ENCODE measurements at regions of chr12 and their contacts with region 1.

Region 1: DNA sequence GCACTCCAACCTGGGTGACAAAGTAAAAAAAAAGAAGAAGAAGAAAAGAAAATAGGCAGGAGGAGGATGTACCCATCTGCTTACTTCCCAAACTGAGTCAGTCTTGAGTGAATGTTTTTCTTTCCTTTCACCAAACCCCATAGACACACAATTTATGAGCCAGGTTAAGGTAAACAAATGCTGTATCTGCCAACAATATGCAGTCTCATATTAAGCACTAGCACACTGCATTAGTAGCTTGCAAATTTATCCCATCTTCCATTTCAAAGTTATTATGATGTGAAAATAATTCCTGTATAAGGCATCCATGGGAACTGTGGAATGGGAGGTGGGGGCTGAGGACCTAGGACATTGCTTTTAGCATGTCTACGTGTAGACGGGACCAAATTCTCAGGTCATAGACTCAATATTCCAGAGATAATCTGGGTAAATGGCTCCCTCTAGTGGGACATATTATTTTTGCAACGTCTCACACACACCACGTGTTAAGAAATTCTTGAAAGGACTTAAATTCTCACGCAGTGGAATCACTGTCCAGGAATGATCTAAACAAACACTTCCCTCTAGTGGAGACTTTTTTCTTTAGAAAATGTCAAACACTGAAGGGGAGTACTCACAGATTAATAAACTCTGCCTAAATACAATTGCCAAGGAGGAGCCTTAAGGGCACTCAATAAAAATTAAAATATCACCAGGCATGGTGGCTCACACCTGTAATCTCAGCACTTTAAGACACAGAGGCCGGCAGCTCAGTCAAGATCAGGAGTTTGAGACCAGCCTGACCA is 17.1 kb upstream of the OR10P1 start:
- DNase-seq: peak; percentile 43 to 54
- H3K4me3 ChIP-seq: no peak overlapping the region
- H3K27ac ChIP-seq: no peak overlapping the region
- H3K4me1 ChIP-seq: no peaks in the 10 kb centered on the region
- H3K27me3 ChIP-seq: no peaks in the 10 kb centered on the region
- CTCF ChIP-seq: peak in 2 of 3 experiments; percentile 75 to 80; a peak in 3 of 4 replicates
- EP300 ChIP-seq: no peak
- POLR2A ChIP-seq: no peak
- RAD21 ChIP-seq: peak; percentile 95 to 98

Region 2: DNA sequence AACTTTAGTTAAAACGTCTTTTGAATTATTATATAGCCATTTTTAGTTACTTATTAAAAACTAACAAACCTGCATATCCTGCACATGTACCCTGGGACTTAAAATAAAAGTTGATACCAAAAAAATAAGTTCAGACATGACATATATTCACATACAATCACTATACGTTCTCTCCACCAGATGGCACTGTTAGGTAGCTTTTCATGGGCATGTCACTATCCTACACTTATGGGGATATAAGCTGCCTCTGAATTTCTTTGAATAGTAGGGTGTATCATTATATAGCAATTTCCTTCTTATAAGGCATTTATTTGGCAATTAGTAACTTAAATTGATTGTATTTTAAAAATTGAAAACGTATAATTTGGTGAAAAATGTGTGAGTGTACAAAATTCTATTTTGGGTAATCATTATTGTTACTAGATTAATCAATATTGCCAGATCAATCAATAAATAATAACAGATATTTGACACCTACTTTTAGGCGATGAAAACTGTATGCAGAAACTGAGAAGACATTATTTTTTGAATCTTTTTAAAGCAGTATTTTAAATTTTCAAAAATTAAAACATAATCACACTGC is 430.5 kb before region 1 on chr12:
- CTCF ChIA-PET with region 1: interaction called, 54 read pairs
- POLR2A ChIA-PET with region 1: no interaction called
- DNase-seq: peak in 1 of 2 experiments; percentile 1
- H3K4me3 ChIP-seq: no peak overlapping the region
- H3K27ac ChIP-seq: no peak overlapping the region
- H3K4me1 ChIP-seq: no peaks in the 10 kb centered on the region
- H3K27me3 ChIP-seq: no peaks in the 10 kb centered on the region
- CTCF ChIP-seq: peak in 2 of 3 experiments; percentile 57 to 61; a peak in 2 of 4 replicates
- EP300 ChIP-seq: no peak
- POLR2A ChIP-seq: no peak
- RAD21 ChIP-seq: peak; percentile 93 to 95

Region 3: DNA sequence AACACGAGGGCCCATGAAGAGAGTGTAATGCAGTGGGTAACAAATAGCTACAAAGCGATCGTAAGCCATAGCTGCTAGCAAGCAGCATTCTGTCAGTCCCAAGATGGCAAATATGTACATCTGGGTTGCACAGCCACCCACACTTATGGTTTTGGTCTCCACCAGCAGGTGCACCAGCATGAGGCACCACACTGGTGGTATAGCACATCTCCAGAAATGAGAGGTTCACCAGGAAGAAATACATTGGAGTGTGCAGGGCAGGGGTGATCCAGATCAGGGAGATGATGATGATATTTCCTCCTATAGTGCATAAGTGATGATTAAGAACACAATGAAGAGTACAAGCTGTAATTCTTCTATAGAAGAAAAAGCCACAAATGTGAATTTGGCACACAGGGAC is 425.2 kb before region 1 on chr12:
- CTCF ChIA-PET with region 1: interaction called, 54 read pairs
- POLR2A ChIA-PET with region 1: no interaction called
- DNase-seq: no peak
- H3K4me3 ChIP-seq: no peak overlapping the region
- H3K27ac ChIP-seq: no peak overlapping the region
- H3K4me1 ChIP-seq: no peaks in the 10 kb centered on the region
- H3K27me3 ChIP-seq: no peaks in the 10 kb centered on the region
- CTCF ChIP-seq: no peak
- EP300 ChIP-seq: no peak
- POLR2A ChIP-seq: no peak
- RAD21 ChIP-seq: no peak

Region 4: GRCh38 chr12:55446326-55446725 is 173.2 kb before region 1 on chr12:
- CTCF ChIA-PET with region 1: interaction called, 17 read pairs
- POLR2A ChIA-PET with region 1: no interaction called
- DNase-seq: no peak
- H3K4me3 ChIP-seq: no peak overlapping the region
- H3K27ac ChIP-seq: no peak overlapping the region
- H3K4me1 ChIP-seq: no peaks in the 10 kb centered on the region
- H3K27me3 ChIP-seq: no peaks in the 10 kb centered on the region
- CTCF ChIP-seq: no peak
- EP300 ChIP-seq: no peak
- POLR2A ChIP-seq: no peak
- RAD21 ChIP-seq: peak; percentile 47 to 56

Region 5: GRCh38 chr12:55654511-55655214 is 35.1 kb after region 1 on chr12:
- CTCF ChIA-PET with region 1: interaction called, 10 read pairs
- POLR2A ChIA-PET with region 1: no interaction called
- DNase-seq: no peak
- H3K4me3 ChIP-seq: no peak overlapping the region
- H3K27ac ChIP-seq: no peak overlapping the region
- H3K4me1 ChIP-seq: peaks cover 0 to 2% (median 0%) of the 10 kb centered on the region in 4 experiments; a peak in 1 of 7 replicates
- H3K27me3 ChIP-seq: no peaks in the 10 kb centered on the region; a peak in 2 of 7 replicates
- CTCF ChIP-seq: no peak
- EP300 ChIP-seq: no peak
- POLR2A ChIP-seq: no peak
- RAD21 ChIP-seq: no peak

Region 6: DNA sequence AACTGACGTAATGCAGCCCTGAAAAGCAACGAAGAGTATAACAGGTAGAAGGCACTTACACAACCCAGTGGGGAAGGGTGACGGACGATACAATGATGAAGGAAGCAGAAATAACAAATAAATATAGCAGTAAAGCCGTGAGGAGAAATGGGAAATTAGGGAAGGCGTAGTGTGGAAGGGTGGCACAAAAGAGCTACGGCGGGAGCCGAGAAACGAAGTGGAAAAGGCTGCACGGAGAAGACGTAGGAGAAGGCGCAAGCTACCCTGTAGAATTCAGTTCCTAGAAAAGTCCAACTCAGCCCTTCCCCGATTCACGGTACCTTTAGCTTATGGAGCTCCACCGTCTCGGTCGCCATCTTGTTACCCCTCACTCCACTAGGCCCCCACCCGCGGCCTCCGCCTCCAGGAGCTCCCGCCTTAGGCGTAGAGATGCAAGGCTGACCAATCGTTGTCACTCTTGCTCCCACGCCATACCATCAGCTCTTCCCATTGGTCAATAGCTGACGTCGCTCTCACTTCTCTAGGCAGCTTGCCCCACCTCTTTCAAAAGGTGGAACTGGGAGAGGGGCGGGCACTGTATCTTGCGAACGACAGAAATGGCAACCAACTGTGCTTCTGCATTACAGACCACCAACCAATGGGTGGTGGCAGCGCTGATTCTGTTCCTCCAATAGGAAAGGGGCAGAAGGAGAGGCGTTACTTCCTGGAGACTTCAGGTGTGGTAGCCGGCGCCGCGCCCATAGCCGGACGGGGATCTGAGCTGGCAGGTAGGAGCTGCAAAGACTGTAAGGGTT is 198.0 kb after region 1 on chr12 and contains the starts of genes ORMDL2 and SARNP:
- CTCF ChIA-PET with region 1: no interaction called
- POLR2A ChIA-PET with region 1: no interaction called
- DNase-seq: peak; percentile 90 to 99
- H3K4me3 ChIP-seq: peak within 1 kb of the TSS; percentile 95 to 100 (median 96)
- H3K27ac ChIP-seq: peak within 1 kb of the TSS; percentile 91
- H3K4me1 ChIP-seq: peaks cover 4 to 8% (median 6%) of the 10 kb centered on the region in 4 experiments
- H3K27me3 ChIP-seq: no peaks in the 10 kb centered on the region
- CTCF ChIP-seq: no peak
- EP300 ChIP-seq: no peak
- POLR2A ChIP-seq: peak; percentile 62 to 93
- RAD21 ChIP-seq: no peak
- total RNA-seq, gene ORMDL2: 34.1 and 39.0 TPM in 2 replicates
- total RNA-seq, gene SARNP: 114 and 117 TPM in 2 replicates